ENCODE measurements at regions of chr16 and their contacts with region 1.

Region 1: DNA sequence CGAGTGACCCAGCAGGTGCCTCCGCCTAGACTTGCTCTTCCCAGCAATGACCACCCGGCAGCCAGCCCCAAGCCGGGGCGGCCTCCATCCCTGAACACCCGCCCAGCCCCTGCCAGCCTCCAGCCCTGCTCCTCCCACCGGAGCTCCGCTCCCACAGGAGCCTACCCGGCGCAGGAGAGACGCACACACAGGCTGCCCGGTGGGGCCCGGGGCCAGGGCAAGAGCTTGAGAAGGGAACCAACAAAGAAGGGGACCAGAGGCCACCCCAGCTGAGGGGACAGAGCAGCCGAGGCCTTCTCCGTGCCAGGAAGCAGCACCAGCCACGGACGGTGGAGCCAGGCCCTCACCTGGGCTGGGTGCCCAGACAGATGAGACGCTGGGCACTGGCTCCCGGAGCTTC is 13.8 kb downstream of the PKD1 start:
- DNase-seq: no peak
- H3K4me3 ChIP-seq: no peak overlapping the region
- H3K27ac ChIP-seq: no peak overlapping the region
- H3K4me1 ChIP-seq: peaks cover 0 to 36% (median 27%) of the 10 kb centered on the region in 4 experiments
- H3K27me3 ChIP-seq: no peaks in the 10 kb centered on the region

Region 2: DNA sequence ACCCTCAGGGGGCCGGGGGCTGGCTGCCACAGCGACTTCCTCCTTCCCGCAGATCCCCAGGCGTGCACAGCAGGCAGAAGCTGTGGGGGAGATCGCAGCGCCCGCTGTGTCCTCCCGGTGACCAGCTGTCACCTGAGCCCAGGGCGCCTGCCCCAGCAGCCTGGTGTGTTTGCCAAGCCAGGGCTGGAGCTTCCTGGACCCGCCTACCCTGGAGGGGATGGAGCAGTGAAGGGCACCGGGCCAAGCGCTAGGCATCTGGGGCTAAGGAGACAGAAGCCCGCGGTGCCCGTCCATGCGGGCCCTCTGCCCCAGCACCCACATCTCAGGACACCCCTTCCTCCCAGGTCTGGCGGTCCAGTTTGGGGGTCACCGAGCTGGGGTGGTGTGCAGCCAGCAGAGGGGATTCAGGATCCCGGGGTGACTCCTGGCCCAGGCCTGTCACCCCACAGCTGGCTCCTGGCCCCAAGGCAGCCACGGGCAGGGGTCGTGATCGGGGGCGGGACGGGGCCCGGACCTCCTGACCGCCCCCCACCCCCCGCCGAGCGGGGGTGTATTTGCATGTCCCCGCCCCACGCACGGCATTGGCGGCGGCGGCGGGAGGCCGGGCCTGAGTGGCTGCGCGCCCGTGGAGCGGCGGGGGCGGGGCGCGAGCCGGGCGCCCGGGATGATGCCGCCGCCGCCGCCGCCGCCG is 26.3 kb after region 1 on chr16 and contains the start of gene RAB26:
- CTCF ChIA-PET with region 1: interaction called, 16 read pairs
- POLR2A ChIA-PET with region 1: interaction called, 5 read pairs
- DNase-seq: peak; percentile 30 to 68 (median 62)
- H3K4me3 ChIP-seq: peak within 1 kb of the TSS in 6 of 7 experiments; percentile 42 to 73 (median 54)
- H3K27ac ChIP-seq: no peak within 1 kb of the TSS
- H3K4me1 ChIP-seq: peaks cover 0 to 62% (median 38%) of the 10 kb centered on the region in 4 experiments
- H3K27me3 ChIP-seq: no peaks in the 10 kb centered on the region

Region 3: GRCh38 chr16:2155091-2156021 is 33.5 kb after region 1 on chr16 and contains the start of gene TRAF7:
- CTCF ChIA-PET with region 1: interaction called, 8 read pairs
- POLR2A ChIA-PET with region 1: interaction called, 11 read pairs
- DNase-seq: peak; percentile 100
- H3K4me3 ChIP-seq: peak within 1 kb of the TSS; percentile 78 to 98 (median 88)
- H3K27ac ChIP-seq: peak within 1 kb of the TSS; percentile 50 to 83
- H3K4me1 ChIP-seq: peaks cover 6 to 55% (median 47%) of the 10 kb centered on the region in 4 experiments
- H3K27me3 ChIP-seq: no peaks in the 10 kb centered on the region